Right cardiac atrium (tissue), 5 donors: ENCODE measurements at regions of chr22 and their contacts with region 1.

Region 1: DNA sequence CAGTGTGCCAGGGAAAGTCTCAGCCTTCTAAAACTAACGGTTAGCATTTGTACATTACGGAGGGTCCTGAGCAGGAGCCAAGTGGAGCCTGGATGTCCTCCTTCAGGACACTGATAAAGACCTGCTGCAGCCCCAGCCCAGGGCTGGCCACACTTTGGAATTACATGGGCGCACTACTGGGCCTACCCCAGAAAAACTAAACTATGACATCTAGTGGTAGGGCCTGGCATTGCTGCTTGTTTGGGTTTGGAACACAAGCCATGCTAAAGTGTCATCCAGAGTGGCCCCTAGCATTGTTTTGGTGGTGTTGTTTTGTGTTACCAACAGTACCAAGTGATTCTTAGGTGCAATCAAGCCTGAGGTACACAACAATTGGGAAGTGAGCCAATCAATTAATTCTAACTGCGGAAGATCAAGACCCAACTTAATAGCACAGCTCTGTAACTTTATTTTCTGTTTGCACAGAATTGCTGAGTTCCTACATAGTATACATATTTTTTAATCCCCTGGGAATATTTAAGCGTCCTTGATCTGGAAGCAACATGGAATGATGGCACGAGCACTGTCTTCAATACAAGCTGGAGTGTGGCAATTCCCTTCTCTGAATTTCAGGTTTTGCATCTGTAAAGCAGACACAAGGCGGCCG is 340.7 kb downstream of the LARGE1 start:
- DNase-seq: peak; percentile 39 to 81 (median 74)
- ATAC-seq: peak; percentile 87 to 89
- H3K4me3 ChIP-seq: no peak overlapping the region
- H3K27ac ChIP-seq: no peak overlapping the region
- H3K4me1 ChIP-seq: no peaks in the 10 kb centered on the region
- H3K27me3 ChIP-seq: no peaks in the 10 kb centered on the region

Region 2: DNA sequence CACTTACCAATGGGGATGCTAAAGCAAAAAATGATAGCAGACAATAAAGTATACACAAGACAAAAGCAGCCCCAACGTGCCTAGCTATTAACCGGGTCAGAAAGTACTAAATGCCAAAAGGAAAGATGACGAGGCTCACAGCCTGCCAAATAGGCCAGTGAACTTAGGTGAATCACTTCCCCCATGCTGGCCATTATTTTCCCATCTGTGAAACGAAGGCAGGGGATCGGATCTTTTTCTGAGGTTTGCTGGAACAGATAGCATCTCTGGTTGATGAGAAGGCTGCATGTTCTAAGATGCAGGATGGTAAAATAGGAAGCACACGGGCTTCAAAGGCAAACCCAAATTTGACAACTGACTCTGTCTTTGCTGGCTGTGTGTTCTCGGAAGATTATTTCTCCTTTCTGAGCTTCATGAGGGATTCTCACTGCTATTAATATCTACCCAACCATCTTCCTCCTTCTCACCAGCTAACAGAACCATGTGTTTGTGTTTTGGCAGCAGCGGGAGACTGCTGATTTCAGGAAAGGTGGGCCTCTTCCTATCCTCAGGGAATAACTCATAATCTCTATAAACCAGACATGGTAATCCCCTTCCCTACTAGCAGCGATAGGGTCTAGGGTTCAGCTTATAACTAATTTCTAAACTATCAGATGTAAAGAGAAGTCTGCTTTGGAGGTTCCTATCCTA is 50.0 kb before region 1 on chr22:
- intact Hi-C with region 1: loop called in 2 of 4 experiments (anchors 10 kb)
- DNase-seq: no peak
- ATAC-seq: peak in 1 of 2 donors; percentile 77
- H3K4me3 ChIP-seq: no peak overlapping the region
- H3K27ac ChIP-seq: no peak overlapping the region
- H3K4me1 ChIP-seq: peaks cover 2% of the 10 kb centered on the region
- H3K27me3 ChIP-seq: no peaks in the 10 kb centered on the region

Region 3: GRCh38 chr22:33639588-33640254 is 60.1 kb after region 1 on chr22:
- intact Hi-C with region 1: no loop called
- DNase-seq: peak in 1 of 3 donors; percentile 47
- ATAC-seq: peak; percentile 73 to 85
- H3K4me3 ChIP-seq: no peak overlapping the region
- H3K27ac ChIP-seq: peak overlapping the region; percentile 23
- H3K4me1 ChIP-seq: no peaks in the 10 kb centered on the region
- H3K27me3 ChIP-seq: no peaks in the 10 kb centered on the region

Region 4: DNA sequence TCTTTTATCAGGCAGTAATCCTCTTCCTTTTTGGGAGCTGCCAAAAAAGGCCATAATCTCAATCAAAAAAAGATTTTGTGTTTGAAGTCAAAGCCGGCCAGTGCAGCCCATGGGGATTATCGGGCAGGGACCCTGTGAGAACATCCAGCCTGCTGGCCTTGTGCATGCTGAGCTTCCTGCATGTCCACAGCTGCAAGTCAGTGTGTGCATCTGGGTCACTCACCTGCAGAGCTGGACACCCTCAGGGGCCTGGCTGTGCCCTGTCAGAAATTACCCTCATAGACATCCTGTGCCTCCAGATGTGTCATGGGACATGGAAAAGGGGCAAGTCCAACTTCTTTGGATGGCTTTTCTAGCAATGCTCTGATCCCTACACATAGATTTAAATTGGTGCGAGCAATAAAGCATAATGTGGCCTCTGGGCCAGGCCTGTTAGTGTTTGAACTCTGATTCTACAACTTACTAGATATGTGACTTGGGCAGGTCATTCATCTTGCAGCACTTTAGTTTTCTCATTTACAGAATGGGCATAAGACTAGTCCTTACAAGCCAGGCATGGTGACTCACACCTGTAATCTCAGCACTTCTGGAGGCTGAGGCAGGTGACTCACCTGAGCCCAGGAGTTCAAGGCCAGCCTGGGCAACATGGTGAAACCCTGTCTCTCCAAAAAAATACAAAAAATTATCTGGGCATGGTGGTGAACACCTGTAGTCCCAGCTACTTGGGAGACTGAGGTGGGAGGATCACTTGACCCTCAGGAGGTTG is 422.3 kb after region 1 on chr22:
- intact Hi-C with region 1: no loop called
- DNase-seq: no peak
- ATAC-seq: no peak
- H3K4me3 ChIP-seq: no peak overlapping the region
- H3K27ac ChIP-seq: no peak overlapping the region
- H3K4me1 ChIP-seq: no peaks in the 10 kb centered on the region
- H3K27me3 ChIP-seq: no peaks in the 10 kb centered on the region